Activated T-helper 1 cell treated with anti-CD3 and anti-CD28 coated beads, Interleukin-12 subunit alpha, Interleukin-12 subunit beta, Interleukin-2, Interleukin-4 antibody, amounts not matched to agents 30 ng/mL and 10 ng/mL and 1 ng/mL, durations not matched to agents 14 hours and 24 hours and 36 hours (primary cell): ENCODE measurements at regions of chr12 and their contacts with region 1.

Region 1: GRCh38 chr12:49662998-49663843 is 39.9 kb downstream of the PRPF40B start:
- DNase-seq: peak; percentile 68
- H3K4me3 Mint-ChIP-seq: peak overlapping the region; percentile 72
- H3K27ac Mint-ChIP-seq: peak overlapping the region; percentile 91
- H3K4me1 Mint-ChIP-seq: peaks cover 75% of the 10 kb centered on the region
- H3K27me3 Mint-ChIP-seq: no peaks in the 10 kb centered on the region

Region 2: GRCh38 chr12:49538510-49539403 is 124.5 kb before region 1 on chr12 and contains the start of gene KCNH3:
- intact Hi-C with region 1: no loop called
- DNase-seq: peak; percentile 80
- H3K4me3 Mint-ChIP-seq: peak within 1 kb of the TSS; percentile 70
- H3K27ac Mint-ChIP-seq: no peak within 1 kb of the TSS
- H3K4me1 Mint-ChIP-seq: no peaks in the 10 kb centered on the region
- H3K27me3 Mint-ChIP-seq: peaks cover 49% of the 10 kb centered on the region
- total RNA-seq, gene KCNH3: 0.93 and 1.6 TPM in 2 replicates

Region 3: DNA sequence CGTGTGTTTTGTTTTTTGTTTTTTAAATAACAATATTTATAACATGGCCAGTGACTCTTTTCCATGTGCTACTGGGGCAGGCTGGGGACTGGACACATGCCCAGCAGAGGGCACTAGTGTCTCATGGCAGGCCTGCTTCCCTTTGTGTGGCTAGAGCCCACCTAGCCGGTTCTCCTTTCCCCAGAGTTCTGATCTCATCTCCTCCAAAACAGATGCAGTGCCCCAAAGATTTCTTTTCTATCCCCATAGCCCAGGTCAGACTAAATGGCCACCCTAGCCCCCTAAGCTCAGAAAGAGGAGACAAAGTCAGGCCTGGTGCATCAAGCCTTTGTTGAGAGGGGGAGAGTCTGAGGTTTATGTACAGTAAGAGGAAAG is 18.6 kb before region 1 on chr12:
- intact Hi-C with region 1: loop called (anchors 1 kb)
- DNase-seq: peak; percentile 71
- H3K4me3 Mint-ChIP-seq: no peak overlapping the region
- H3K27ac Mint-ChIP-seq: peak overlapping the region; percentile 82
- H3K4me1 Mint-ChIP-seq: peaks cover 26% of the 10 kb centered on the region
- H3K27me3 Mint-ChIP-seq: no peaks in the 10 kb centered on the region

Region 4: GRCh38 chr12:49673446-49674317 is 10.5 kb after region 1 on chr12:
- intact Hi-C with region 1: loop called (anchors 1 kb)
- DNase-seq: no peak
- H3K4me3 Mint-ChIP-seq: peak overlapping the region; percentile 16
- H3K27ac Mint-ChIP-seq: peak overlapping the region; percentile 89
- H3K4me1 Mint-ChIP-seq: peaks cover 84% of the 10 kb centered on the region
- H3K27me3 Mint-ChIP-seq: no peaks in the 10 kb centered on the region

Region 5: DNA sequence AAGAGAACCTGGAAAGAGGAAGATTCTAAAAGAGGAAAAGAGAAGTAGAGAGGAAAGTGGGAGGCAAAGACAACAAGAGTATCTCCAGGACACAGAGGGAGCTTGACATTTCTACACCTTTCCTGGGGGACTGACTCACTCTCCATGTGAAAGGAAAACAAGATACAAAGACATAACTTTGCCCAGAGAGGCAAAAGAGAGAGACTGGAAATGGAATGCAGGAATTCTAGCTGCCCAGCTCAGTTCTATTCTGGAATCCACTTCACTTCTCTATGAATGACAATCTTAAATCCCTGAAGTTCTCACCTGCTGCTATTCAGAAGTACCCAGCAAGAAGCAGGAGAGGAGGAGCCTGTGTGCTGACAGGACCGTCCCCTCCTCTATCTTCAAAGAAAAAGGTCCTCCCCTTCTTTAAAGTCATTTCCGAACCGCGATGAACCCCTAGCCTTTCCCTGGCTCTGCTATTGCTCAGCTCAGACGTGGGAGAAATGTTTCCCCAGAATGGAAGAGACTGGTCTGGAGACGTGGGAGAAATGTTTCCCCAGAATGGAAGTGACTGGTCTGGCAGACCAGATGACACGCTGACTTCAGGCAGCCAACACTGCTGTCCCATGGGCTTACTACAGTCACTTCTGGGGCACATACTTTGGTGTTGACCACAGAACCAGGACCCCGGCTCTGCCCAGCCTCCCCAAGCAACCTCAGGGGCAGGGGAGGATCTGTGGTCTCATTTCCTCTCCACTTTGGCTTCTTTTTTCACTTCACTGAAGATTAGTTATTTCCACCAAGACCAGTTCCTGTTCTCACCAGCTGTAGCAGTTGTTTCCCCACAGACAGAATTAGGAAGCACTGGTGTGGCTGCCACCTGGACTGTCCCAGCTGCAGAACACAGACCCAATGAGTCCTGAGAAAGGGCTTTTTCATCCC is 35.7 kb after region 1 on chr12:
- intact Hi-C with region 1: loop called (anchors 1 kb)
- DNase-seq: peak; percentile 21
- H3K4me3 Mint-ChIP-seq: peak overlapping the region; percentile 67
- H3K27ac Mint-ChIP-seq: peak overlapping the region; percentile 83
- H3K4me1 Mint-ChIP-seq: peaks cover 61% of the 10 kb centered on the region
- H3K27me3 Mint-ChIP-seq: peaks cover 2% of the 10 kb centered on the region

Region 6: GRCh38 chr12:49707128-49707811 is 44.0 kb after region 1 on chr12 and contains the start of gene FMNL3:
- intact Hi-C with region 1: loop called (anchors 1 kb)
- DNase-seq: peak; percentile 98
- H3K4me3 Mint-ChIP-seq: peak within 1 kb of the TSS; percentile 96
- H3K27ac Mint-ChIP-seq: peak within 1 kb of the TSS; percentile 89
- H3K4me1 Mint-ChIP-seq: peaks cover 48% of the 10 kb centered on the region
- H3K27me3 Mint-ChIP-seq: peaks cover 20% of the 10 kb centered on the region
- total RNA-seq, gene FMNL3: 43.0 and 46.1 TPM in 2 replicates

Region 7: DNA sequence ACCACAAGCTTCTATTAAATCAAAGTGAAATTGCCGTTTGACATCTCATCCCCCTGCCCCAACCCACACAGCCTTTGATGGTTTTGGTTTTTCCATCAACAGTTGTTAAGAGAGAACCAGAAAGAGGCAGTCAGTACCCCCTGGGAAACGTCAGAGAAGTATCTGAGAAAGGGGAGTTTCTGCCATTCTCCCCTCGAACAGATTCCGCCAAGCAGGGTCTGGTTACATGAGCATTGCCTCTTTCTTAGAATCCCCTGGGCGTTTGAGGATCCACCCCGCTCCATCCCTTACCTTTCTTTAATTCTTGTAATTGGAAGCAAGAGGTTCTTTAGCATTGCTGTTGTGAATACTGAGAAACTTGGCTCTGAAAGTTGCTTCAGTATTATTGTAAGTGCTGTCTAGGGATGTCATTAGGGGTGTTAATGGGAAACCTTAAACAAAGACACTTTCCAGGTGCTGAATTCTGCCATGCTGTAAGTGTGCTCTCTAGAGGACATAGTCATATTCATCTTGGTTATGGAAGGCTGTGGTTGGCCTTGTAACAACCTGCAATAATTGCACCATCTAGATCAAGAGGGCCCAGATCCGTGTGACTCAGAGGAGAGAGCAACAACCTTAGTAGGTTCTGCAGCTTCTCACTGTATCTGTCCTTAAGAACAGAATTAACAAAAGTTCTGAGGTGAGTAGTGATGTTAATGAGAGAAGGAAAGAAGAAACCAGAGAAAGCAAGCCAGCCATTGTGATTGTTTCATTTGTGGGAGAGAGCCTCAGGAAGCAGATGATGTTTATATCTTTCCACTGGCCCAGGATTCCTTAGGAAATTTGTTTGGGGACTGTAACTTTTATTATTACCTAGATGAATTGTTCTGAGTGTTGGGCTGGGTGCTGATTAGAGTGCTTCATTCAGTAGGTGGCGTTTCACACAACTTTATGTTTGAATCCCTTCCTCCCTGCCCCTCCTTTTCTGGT is 87.1 kb after region 1 on chr12:
- intact Hi-C with region 1: loop called (anchors 5 kb)
- DNase-seq: peak; percentile 20
- H3K4me3 Mint-ChIP-seq: peak overlapping the region; percentile 40
- H3K27ac Mint-ChIP-seq: peak overlapping the region; percentile 85
- H3K4me1 Mint-ChIP-seq: peaks cover 64% of the 10 kb centered on the region
- H3K27me3 Mint-ChIP-seq: no peaks in the 10 kb centered on the region

Region 8: GRCh38 chr12:49967042-49967776 is 304.0 kb after region 1 on chr12:
- intact Hi-C with region 1: no loop called
- DNase-seq: peak; percentile 83
- H3K4me3 Mint-ChIP-seq: peak overlapping the region; percentile 67
- H3K27ac Mint-ChIP-seq: peak overlapping the region; percentile 69
- H3K4me1 Mint-ChIP-seq: no peaks in the 10 kb centered on the region
- H3K27me3 Mint-ChIP-seq: peaks cover 34% of the 10 kb centered on the region